Esophagus muscularis mucosa (tissue), 4 donors: ENCODE measurements at regions of chr6 and their contacts with region 1.

Region 1: GRCh38 chr6:56843573-56844349 is 111.1 kb upstream of the BEND6 start:
- DNase-seq: no peak
- H3K4me3 ChIP-seq: peak overlapping the region; percentile 84 to 94 (median 90)
- H3K27ac ChIP-seq: peak overlapping the region; percentile 92 to 96 (median 94)
- H3K4me1 ChIP-seq: peaks cover 4 to 44% (median 35%) of the 10 kb centered on the region in 4 donors
- H3K27me3 ChIP-seq: no peaks in the 10 kb centered on the region
- CTCF ChIP-seq: peak in 2 of 3 experiments; percentile 73 to 74
- EP300 ChIP-seq: no peak
- POLR2A ChIP-seq: peak; percentile 64

Region 2: DNA sequence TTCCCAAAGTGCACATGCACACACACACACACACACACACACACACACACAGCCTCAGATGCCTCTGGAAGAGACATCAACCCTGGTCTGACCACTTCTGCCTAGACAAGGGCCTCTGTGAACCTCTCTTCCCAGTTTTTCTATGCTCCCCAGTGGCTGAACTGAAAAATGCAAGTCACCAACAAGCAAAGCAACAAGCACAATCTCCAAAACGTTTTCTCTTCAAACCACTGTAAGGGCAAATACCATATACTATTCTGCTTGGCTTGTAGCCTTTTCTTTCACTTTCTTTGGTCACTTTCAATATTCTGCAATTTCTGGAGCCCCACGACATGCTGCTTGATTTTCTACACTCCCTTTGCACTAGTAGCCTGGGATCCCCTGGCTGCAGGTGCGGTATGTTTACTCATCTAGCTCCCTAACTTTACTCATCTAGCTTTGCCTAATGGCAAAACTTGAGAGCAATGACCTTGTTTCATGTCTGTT is 79.6 kb before region 1 on chr6:
- intact Hi-C with region 1: loop called (anchors 5 kb)
- DNase-seq: no peak
- H3K4me3 ChIP-seq: no peak overlapping the region
- H3K27ac ChIP-seq: no peak overlapping the region
- H3K4me1 ChIP-seq: peaks cover 40 to 68% (median 60%) of the 10 kb centered on the region in 4 donors
- H3K27me3 ChIP-seq: no peaks in the 10 kb centered on the region
- CTCF ChIP-seq: peak; percentile 22 to 51 (median 29)
- EP300 ChIP-seq: no peak
- POLR2A ChIP-seq: no peak